ENCODE measurements at regions of chr14 and their contacts with region 1.

Region 1: DNA sequence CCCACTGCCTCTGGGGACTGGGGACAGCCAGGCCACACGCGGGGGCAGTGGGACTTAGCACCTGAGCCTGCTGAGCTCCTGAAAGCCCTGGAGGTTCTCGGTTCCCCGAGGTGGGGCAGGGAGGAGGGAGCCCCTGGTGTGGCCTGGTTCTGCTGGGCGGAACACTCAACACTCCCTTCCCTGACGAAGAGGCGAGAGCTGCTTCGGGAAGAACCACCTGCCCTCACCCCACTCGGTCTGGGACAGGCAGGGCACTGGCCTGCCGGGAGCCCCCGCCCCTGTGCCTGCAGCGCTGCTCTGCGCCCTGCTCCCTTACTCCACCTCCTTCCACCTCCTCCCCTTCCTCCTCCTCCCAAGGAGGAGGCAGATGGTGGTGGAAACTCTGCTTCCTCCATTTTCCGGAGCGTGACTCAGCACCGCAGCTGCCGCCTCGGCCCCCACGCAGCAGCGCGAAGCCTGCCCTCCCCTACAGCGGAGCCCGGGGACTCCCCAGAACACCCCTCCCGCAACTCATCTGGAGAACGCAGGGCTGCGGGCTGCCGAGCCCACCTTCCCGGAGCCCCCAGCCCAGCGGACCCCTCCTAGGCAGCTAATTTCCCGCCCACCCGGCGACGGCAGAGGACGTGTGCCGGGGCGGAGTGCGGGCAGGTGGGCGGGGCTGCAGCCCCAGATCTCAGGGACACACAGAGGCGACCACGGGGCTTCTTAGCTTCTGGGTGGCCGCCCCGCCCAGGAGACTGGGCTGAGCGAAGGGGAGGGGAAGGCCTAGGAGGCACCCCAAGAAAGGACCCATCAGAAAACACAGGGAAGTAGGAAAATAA is 11.7 kb upstream of the INF2 start:
- DNase-seq: peak; percentile 75 to 85
- ATAC-seq: peak; percentile 16 to 49
- H3K4me3 ChIP-seq: peak overlapping the region; percentile 39
- H3K27ac ChIP-seq: peak overlapping the region; percentile 98 to 100
- H3K4me1 ChIP-seq: peaks cover 61% of the 10 kb centered on the region
- CTCF ChIP-seq: no peak
- EP300 ChIP-seq: no peak
- POLR2A ChIP-seq: peak; percentile 68
- RAD21 ChIP-seq: no peak

Region 2: DNA sequence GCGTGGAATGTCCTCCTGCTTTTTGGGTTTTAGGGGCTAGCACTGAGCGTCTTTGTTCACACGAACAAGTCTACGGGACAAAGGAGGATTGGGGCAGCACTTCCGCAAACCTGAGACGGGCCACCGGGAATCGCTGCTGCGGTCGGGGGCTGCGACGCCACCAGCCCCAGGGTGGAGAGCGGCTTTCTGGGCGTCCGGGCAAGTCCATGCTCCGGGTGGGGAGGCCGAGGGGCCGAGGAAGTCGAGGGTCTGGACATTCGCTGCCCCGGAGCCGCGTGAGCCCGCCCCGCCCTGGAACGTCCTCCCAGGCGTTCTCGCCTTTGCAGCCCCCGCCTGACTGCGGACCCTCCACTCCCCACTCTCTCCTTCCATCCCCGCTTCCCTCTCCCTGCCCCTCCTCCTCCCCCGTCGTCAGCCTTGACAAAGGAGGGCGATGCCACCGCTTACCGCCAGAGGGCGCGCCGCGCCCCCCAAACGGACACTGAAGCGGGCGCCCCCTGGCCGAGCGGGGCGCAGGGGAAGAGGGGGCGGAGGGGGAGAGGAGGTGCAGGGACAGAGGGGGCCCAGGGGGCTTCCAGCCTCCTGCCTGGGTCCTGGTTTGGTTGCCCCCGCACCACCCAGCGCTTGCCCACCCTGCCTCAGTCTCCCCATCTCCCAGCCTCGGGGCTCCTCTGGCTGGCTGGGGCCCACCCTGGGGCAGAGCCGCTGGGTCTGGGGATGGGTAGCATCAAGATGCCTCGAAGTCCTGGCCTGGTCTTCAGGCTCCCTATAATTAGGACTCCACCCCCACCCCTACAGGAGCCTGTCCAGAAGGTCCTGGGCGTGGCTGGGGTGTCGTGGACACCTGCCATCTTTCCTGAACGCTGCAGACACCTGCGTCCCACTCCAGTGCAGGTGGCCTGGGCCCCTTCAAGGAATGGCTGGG is 27.4 kb before region 1 on chr14:
- CTCF ChIA-PET with region 1: interaction called, 13 read pairs
- POLR2A ChIA-PET with region 1: interaction called, 3 read pairs
- DNase-seq: peak; percentile 53 to 82
- ATAC-seq: peak; percentile 88 to 95
- H3K4me3 ChIP-seq: peak overlapping the region; percentile 33
- H3K27ac ChIP-seq: peak overlapping the region; percentile 66 to 86
- H3K4me1 ChIP-seq: peaks cover 5% of the 10 kb centered on the region; the same call in 2 of the 3 replicates
- CTCF ChIP-seq: peak; percentile 98
- EP300 ChIP-seq: no peak
- POLR2A ChIP-seq: no peak
- RAD21 ChIP-seq: peak; percentile 87 to 97

Region 3: DNA sequence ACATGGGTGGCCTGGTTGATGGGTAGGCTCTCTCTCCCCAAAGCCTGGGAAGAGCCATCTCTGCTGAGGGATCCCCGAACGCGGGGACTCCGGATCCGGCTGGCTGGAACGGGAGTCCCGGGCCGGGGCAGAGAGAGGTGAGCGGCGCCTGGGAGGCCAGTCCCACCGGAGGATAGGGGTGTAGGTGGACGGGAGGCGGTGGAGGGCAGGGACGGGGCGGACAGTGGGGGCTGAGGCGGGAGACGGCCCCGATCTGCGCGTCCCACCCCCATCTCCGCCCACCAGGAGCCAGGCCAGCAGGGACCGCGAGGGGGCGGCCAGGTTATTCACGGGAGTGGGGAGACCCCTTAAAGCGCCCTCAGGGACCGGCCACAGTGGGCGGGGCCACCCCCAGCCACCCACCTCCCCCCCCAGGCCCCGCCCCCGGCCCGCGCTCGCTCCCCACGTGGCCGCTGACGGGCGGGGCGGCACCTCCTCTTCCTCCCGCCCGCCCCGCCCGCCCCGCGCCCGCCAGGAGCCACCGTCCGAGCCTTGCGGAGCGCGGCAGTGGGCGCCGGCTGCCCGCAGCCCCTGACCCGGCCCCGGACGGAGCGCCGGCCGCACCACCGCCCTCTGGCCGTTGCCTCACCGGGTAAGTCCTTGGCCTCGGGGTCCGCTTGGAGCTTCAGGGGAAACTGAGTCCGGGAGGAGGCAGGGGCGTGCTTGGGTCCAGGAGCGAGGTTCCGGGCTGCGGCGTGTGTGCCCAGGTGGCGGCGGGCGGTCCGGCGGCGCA is 11.6 kb after region 1 on chr14 and contains the start of gene INF2:
- CTCF ChIA-PET with region 1: interaction called, 18 read pairs
- POLR2A ChIA-PET with region 1: interaction called, 29 read pairs
- DNase-seq: peak; percentile 84 to 87
- ATAC-seq: peak; percentile 64 to 71
- H3K4me3 ChIP-seq: peak within 1 kb of the TSS; percentile 99
- H3K27ac ChIP-seq: peak within 1 kb of the TSS; percentile 98
- H3K4me1 ChIP-seq: peaks cover 73% of the 10 kb centered on the region
- CTCF ChIP-seq: peak; percentile 26; the same call in 1 of the 3 replicates
- EP300 ChIP-seq: no peak
- POLR2A ChIP-seq: peak; percentile 56
- RAD21 ChIP-seq: peak; percentile 8 to 40; a peak in 4 of 5 replicates
- polyA plus RNA-seq, gene INF2: 23.6 and 24.7 TPM in 2 replicates

Region 4: GRCh38 chr14:104694991-104695659 is 17.4 kb after region 1 on chr14:
- CTCF ChIA-PET with region 1: interaction called, 18 read pairs
- POLR2A ChIA-PET with region 1: interaction called, 4 read pairs
- DNase-seq: no peak
- ATAC-seq: 0 out of 6 replicates have a peak, but pooled peaks of 1 of the 2 experiments have one; percentile 6
- H3K4me3 ChIP-seq: no peak overlapping the region
- H3K27ac ChIP-seq: peak overlapping the region; percentile 31 to 98; a peak in 4 of 6 replicates
- H3K4me1 ChIP-seq: peaks cover 95% of the 10 kb centered on the region
- CTCF ChIP-seq: no peak
- EP300 ChIP-seq: no peak
- POLR2A ChIP-seq: no peak
- RAD21 ChIP-seq: no peak